Endothelial cell of umbilical vein (primary cell): ENCODE measurements at regions of chr7 and their contacts with region 1.

Region 1: GRCh38 chr7:150988230-150989226 is 2.3 kb upstream of the NOS3 start:
- DNase-seq: peak; percentile 87
- H3K4me3 ChIP-seq: no peak overlapping the region
- H3K27ac ChIP-seq: peak overlapping the region; percentile 52
- H3K4me1 ChIP-seq: peaks cover 26% of the 10 kb centered on the region
- H3K27me3 ChIP-seq: peaks cover 0 to 1% of the 10 kb centered on the region in 2 experiments
- CTCF ChIP-seq: peak; percentile 93 to 96
- POLR2A ChIP-seq: peak; percentile 47

Region 2: DNA sequence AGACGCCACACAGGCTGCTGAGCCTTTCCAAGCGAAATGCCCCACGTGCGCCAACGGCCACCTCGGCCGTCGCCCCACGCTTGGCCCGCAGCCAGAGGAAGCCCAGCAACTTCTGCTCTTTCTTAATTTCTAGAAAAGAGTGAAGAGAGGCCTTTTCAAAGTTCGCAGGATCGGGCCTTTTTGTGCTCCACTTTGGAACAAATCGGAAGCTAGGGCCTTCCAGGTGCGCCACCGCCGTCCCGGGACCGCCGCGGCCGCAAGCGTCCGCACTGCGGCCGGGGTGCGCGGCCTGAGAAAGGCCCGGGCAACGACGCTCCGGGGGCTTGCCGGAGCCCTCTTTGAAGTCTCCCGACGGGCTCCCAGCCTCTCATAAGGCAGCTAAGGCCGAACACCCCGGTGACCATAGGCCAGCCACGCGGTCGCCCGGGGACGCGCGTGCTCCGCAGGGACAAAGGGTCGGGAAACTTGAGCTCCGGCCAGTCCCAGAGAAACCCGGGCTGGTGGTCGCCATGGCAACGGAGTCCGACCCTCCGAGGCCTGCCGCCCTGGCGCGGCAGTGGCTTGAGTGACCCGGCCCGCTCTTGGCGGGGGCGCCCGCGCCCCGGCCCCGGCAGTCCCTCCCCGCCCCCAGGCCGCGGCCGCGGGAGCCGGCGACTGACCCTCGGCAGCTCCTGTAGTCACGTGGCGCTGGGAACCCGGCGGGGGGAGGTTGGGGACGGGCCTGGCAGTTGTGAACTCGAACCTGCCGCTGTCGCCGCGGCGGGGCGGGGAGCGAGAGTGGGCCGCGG is 620.2 kb before region 1 on chr7 and contains the start of gene REPIN1:
- CTCF ChIA-PET with region 1: interaction called, 3 read pairs
- POLR2A ChIA-PET with region 1: no interaction called
- dilution Hi-C with region 1: no loop called
- intact Hi-C with region 1: loop called (anchors 5 kb)
- DNase-seq: peak; percentile 76
- H3K4me3 ChIP-seq: peak within 1 kb of the TSS; percentile 49 to 79 (median 62)
- H3K27ac ChIP-seq: peak within 1 kb of the TSS; percentile 57
- H3K4me1 ChIP-seq: peaks cover 26% of the 10 kb centered on the region
- H3K27me3 ChIP-seq: no peaks in the 10 kb centered on the region
- CTCF ChIP-seq: no peak
- POLR2A ChIP-seq: no peak
- total RNA-seq, gene REPIN1: 139 and 140 TPM in 2 replicates

Region 3: GRCh38 chr7:150778738-150779301 is 209.7 kb before region 1 on chr7:
- CTCF ChIA-PET with region 1: interaction called, 9 read pairs
- POLR2A ChIA-PET with region 1: no interaction called
- dilution Hi-C with region 1: no loop called
- intact Hi-C with region 1: loop called (anchors 1 kb)
- DNase-seq: peak; percentile 80
- H3K4me3 ChIP-seq: no peak overlapping the region
- H3K27ac ChIP-seq: no peak overlapping the region
- H3K4me1 ChIP-seq: no peaks in the 10 kb centered on the region
- H3K27me3 ChIP-seq: peaks cover 12 to 13% of the 10 kb centered on the region in 2 experiments
- CTCF ChIP-seq: peak; percentile 80 to 90
- POLR2A ChIP-seq: no peak

Region 4: DNA sequence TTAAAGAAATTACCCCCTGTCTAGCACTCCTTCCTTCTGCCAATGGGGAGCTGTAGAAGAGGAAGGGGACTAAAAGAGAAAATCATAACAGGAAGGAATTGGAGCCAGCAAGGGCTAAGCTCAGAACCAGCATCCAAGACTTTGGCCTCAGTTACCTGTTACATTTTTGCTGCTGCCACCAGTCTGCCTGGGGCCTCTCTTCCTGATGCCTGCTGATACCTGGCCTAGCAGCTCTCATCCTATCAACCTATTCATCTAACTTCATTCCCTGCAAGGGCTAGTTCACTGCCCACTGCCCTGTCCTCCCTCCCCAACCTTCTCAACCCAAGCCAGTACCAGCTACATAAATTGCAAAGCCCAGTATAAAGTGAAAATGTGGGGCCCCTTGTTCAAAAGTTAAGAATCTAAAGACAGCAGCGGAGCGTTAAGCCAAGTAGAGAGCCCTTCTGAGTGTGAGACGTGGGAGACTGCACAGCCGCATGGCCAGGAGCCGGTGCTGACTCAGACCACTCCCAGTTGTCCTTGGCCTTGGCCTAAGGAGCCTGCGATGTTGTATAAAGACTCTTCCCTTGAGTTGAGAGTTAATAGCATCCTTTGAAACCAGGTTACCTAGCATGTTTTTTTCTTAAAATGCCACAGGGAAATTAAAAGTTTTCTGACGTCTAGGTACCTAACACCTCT is 149.4 kb before region 1 on chr7:
- CTCF ChIA-PET with region 1: no interaction called
- POLR2A ChIA-PET with region 1: no interaction called
- dilution Hi-C with region 1: no loop called
- intact Hi-C with region 1: no loop called
- DNase-seq: no peak
- H3K4me3 ChIP-seq: no peak overlapping the region
- H3K27ac ChIP-seq: no peak overlapping the region
- H3K4me1 ChIP-seq: no peaks in the 10 kb centered on the region
- H3K27me3 ChIP-seq: peaks cover 0 to 3% of the 10 kb centered on the region in 2 experiments
- CTCF ChIP-seq: no peak
- POLR2A ChIP-seq: no peak

Region 5: GRCh38 chr7:150898475-150899011 is 90.0 kb before region 1 on chr7:
- CTCF ChIA-PET with region 1: interaction called, 26 read pairs
- POLR2A ChIA-PET with region 1: no interaction called
- dilution Hi-C with region 1: no loop called
- intact Hi-C with region 1: loop called (anchors 1 kb)
- DNase-seq: peak; percentile 57
- H3K4me3 ChIP-seq: no peak overlapping the region
- H3K27ac ChIP-seq: no peak overlapping the region
- H3K4me1 ChIP-seq: no peaks in the 10 kb centered on the region
- H3K27me3 ChIP-seq: peaks cover 5 to 6% of the 10 kb centered on the region in 2 experiments
- CTCF ChIP-seq: peak; percentile 94 to 97
- POLR2A ChIP-seq: no peak

Region 6: GRCh38 chr7:150974468-150975391 is 13.8 kb before region 1 on chr7:
- CTCF ChIA-PET with region 1: interaction called, 25 read pairs
- POLR2A ChIA-PET with region 1: no interaction called
- dilution Hi-C with region 1: no loop called
- intact Hi-C with region 1: loop called (anchors 1 kb)
- DNase-seq: peak; percentile 12
- H3K4me3 ChIP-seq: peak overlapping the region in 1 of 3 experiments; percentile 8
- H3K27ac ChIP-seq: no peak overlapping the region
- H3K4me1 ChIP-seq: peaks cover 10% of the 10 kb centered on the region
- H3K27me3 ChIP-seq: peaks cover 18 to 25% of the 10 kb centered on the region in 2 experiments
- CTCF ChIP-seq: peak; percentile 35 to 51
- POLR2A ChIP-seq: no peak

Region 7: GRCh38 chr7:151017953-151018420 is 29.5 kb after region 1 on chr7:
- CTCF ChIA-PET with region 1: interaction called, 68 read pairs
- POLR2A ChIA-PET with region 1: no interaction called
- dilution Hi-C with region 1: no loop called
- intact Hi-C with region 1: no loop called
- DNase-seq: peak; percentile 58
- H3K4me3 ChIP-seq: no peak overlapping the region
- H3K27ac ChIP-seq: no peak overlapping the region
- H3K4me1 ChIP-seq: peaks cover 7% of the 10 kb centered on the region
- H3K27me3 ChIP-seq: peaks cover 12 to 14% of the 10 kb centered on the region in 2 experiments
- CTCF ChIP-seq: peak; percentile 98 to 99
- POLR2A ChIP-seq: no peak

Region 8: DNA sequence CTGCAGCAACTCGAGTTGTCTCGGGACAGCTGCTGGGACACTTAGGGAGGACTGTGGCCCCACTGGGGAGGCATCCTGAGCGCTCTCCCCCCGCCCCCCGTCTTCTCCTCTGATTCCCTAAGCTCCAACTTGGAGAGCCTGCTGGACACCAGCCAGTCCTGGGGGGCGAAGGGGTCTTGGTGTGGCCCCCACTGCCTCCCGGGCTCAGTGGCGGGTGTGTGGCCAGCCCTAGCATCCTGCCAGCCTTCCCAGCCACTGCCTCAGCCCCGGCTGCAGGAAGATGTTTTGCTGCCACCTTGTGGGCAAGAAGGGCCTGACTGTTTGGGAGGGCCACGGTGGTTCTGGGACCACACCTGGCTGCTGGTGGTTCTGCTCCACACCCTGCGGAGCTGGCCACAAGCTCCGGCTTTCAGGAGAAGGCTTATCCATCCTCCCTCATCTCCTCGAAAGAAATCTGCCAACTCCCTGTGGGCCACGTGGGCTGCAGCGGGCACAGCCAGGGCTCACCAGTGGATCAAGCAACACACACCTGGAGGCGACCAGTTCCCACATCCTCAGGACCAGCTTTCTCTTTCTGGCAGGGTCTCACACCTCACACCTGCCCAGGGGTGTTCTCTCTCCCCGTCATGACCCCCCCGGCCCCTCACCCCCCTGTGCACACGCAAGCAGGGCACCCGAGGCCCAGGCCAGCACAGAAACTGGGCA is 122.6 kb after region 1 on chr7:
- CTCF ChIA-PET with region 1: interaction called, 5 read pairs
- POLR2A ChIA-PET with region 1: interaction called, 8 read pairs
- dilution Hi-C with region 1: no loop called
- intact Hi-C with region 1: loop called (anchors 2 kb)
- DNase-seq: peak; percentile 65
- H3K4me3 ChIP-seq: no peak overlapping the region
- H3K27ac ChIP-seq: no peak overlapping the region
- H3K4me1 ChIP-seq: peaks cover 19% of the 10 kb centered on the region
- H3K27me3 ChIP-seq: no peaks in the 10 kb centered on the region
- CTCF ChIP-seq: peak; percentile 85 to 91
- POLR2A ChIP-seq: no peak